ENCODE measurements at regions of chr16 and their contacts with region 1.

Region 1: GRCh38 chr16:31202414-31203375 is at the start of gene PYCARD:
- DNase-seq: peak; percentile 90
- ATAC-seq: peak; percentile 88
- H3K4me3 ChIP-seq: peak within 1 kb of the TSS; percentile 88
- H3K27ac ChIP-seq: peak within 1 kb of the TSS; percentile 68
- H3K4me1 ChIP-seq: peaks cover 11% of the 10 kb centered on the region
- H3K27me3 ChIP-seq: no peaks in the 10 kb centered on the region
- CTCF ChIP-seq: no peak
- total RNA-seq, gene PYCARD: 49.5 TPM

Region 2: GRCh38 chr16:30509081-30509765 is 693.5 kb before region 1 on chr16:
- intact Hi-C with region 1: no loop called
- DNase-seq: no peak
- ATAC-seq: no peak
- H3K4me3 ChIP-seq: no peak overlapping the region
- H3K27ac ChIP-seq: no peak overlapping the region
- H3K4me1 ChIP-seq: no peaks in the 10 kb centered on the region
- H3K27me3 ChIP-seq: no peaks in the 10 kb centered on the region
- CTCF ChIP-seq: no peak

Region 3: DNA sequence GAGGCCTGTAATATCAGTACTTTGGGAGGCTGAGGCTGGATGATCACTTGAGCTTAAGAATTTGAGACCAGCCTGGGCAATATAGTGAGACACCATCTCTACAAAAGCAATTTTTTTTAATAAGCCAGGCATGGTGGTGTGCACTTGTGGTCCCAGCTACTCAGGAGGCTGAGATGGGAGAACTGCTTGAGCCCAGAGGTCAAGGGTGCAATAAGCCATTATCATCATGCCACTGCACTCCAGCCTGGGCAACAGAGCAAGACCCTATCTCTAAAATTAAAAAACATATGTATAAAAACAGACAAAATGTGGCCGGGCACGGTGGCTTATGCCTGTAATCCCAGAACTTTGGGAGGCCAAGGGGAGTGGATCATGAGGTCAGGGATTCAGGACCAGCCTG is 614.0 kb before region 1 on chr16:
- intact Hi-C with region 1: no loop called
- DNase-seq: no peak
- ATAC-seq: no peak
- H3K4me3 ChIP-seq: no peak overlapping the region
- H3K27ac ChIP-seq: no peak overlapping the region
- H3K4me1 ChIP-seq: peaks cover 14% of the 10 kb centered on the region
- H3K27me3 ChIP-seq: no peaks in the 10 kb centered on the region
- CTCF ChIP-seq: no peak

Region 4: DNA sequence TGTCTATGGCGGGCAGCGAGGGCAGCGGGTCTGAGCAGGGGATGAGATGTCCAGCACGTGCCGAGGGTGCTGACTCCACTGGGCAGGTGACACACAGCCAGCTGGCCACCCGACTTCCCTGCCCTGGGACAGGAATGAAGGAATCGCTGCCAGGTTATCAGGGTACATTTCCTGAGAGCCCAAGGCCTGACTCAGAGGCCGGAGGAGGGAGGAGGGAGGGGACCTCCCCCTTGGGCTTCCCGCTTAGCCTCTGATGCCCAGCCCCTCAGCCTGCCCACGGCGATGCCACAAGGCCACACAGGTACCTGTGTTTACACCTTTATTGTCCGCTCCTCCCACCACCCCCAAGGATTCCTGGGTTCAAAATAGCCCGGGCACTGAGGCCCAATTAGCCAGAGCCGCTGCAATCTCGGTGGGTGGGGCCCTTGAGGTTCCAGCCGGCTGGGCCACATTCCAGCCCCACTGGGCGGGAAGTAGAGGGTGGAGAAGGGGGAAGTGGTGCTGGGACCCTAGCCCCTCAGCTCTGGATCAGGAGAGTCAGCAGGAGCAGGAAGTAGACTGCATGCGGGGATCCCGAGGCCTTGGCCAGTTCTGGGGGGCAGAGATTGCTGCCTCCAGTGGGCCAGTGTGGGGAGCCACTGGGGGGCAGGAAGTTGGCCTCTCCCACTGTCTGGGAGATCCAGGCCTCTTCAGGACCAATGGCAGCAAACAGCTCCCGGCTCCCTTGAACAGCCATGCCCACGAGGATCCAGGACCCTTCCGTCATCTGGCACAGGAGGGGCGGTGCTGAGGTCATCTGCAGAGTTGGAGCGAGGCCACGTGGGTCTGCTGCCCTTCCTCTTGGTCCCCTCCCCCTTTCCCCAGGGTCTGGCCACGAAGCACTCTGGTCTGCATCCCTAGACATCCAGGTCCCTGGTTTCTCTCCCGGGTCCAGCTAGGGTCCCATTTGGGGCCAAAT is 63.8 kb before region 1 on chr16:
- intact Hi-C with region 1: no loop called
- DNase-seq: peak; percentile 92
- ATAC-seq: peak; percentile 56
- H3K4me3 ChIP-seq: peak overlapping the region; percentile 25
- H3K27ac ChIP-seq: peak overlapping the region; percentile 70
- H3K4me1 ChIP-seq: peaks cover 24% of the 10 kb centered on the region
- H3K27me3 ChIP-seq: no peaks in the 10 kb centered on the region
- CTCF ChIP-seq: no peak

Region 5: DNA sequence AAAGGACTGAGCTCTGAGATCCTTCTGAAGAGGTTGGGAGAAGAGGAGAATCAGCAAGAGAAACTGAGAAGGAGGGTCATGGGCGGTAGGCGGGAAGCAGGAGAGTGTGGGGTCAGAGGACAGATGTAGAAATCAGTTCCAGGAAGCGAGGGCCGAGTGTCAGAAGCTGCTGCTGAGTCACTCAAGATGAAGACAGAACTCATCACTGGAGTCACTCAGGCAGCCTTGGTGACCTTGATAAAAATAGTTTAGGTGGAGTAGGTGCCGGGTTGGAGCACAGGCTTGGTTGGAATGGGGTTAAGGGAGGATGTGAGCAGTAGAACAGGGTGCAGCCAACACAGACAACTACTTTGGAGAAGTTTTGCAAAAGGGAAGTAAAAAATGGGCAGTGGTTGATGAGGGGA is 50.9 kb after region 1 on chr16:
- intact Hi-C with region 1: loop called (anchors 10 kb)
- DNase-seq: no peak
- ATAC-seq: peak; percentile 94
- H3K4me3 ChIP-seq: no peak overlapping the region
- H3K27ac ChIP-seq: peak overlapping the region; percentile 55
- H3K4me1 ChIP-seq: no peaks in the 10 kb centered on the region
- H3K27me3 ChIP-seq: no peaks in the 10 kb centered on the region
- CTCF ChIP-seq: no peak

Region 6: DNA sequence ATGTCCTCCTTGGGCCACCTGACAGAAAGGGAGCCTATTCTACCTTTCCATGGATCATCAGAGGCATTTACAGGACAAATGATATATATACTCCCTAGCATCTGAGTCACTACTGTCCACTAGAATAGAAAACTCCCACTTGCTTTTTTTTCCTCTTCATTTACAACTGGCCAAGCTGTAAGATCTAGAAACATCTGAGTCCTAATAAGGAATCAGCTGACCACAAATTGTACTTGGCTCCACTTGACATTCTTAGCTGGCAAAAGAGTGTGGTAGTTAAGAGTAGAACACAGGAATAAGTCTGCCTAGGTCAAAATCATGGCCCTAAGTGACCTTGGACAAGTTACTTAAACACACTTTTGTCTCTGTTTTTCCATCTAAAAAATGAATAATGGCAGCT is 300.3 kb after region 1 on chr16:
- intact Hi-C with region 1: no loop called
- DNase-seq: no peak
- ATAC-seq: peak; percentile 74
- H3K4me3 ChIP-seq: no peak overlapping the region
- H3K27ac ChIP-seq: no peak overlapping the region
- H3K4me1 ChIP-seq: peaks cover 27% of the 10 kb centered on the region
- H3K27me3 ChIP-seq: no peaks in the 10 kb centered on the region
- CTCF ChIP-seq: no peak